Gastrocnemius medialis (tissue), 4 donors: ENCODE measurements at regions of chrX and their contacts with region 1.

Region 1: DNA sequence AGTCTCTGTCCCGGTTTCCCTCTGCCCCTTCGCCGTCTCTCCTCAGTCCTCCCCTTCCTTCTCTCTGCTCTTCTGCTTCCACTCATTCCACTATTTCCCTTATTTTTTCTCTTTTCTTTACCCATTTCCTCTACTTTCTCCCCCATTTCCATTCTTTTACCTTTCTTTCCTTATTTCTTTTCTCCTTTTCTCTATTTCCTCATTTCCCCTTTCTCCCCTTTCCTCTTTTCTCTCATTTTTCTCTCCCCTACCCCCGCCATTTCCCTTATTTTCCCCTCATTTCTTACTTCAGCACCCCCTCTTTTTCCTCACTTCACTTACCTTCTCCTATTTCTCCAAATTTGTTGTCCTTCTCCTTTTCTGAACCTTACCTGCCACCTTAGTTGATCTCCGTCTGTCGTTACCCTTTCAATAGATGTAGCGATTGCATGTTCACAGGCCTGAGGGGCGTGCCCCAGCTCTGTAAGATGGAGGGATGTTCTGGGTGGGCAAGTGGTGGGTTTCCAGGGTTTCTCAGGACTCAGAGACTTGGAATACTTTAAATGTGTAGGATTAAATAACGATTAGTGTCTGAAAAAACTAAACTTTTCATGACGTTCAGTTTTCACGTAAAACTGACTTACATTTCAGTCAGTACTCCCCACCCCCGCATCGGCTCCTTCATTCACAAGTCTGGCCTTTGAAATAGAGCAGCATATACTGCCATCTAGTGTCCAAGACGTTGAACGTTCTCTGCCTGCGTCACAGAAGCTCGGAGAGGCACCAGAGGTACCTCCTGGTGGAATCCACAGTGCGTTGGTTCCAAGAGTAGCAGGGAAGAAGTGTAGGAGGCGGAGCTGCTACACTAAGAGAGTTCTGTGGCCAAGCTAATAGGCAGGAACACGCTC is 641 bp upstream of the NCBP2L start:
- DNase-seq: peak; percentile 74 to 78
- ATAC-seq: peak; percentile 59 to 76
- H3K4me3 ChIP-seq: peak overlapping the region; percentile 64 to 74 (median 68)
- H3K27ac ChIP-seq: peak overlapping the region; percentile 91 to 96 (median 93)
- H3K4me1 ChIP-seq: peaks cover 9 to 13% of the 10 kb centered on the region in 2 donors
- H3K27me3 ChIP-seq: no peaks in the 10 kb centered on the region
- CTCF ChIP-seq: peak; percentile 66 to 81 (median 78)
- POLR2A ChIP-seq: no peak

Region 2: DNA sequence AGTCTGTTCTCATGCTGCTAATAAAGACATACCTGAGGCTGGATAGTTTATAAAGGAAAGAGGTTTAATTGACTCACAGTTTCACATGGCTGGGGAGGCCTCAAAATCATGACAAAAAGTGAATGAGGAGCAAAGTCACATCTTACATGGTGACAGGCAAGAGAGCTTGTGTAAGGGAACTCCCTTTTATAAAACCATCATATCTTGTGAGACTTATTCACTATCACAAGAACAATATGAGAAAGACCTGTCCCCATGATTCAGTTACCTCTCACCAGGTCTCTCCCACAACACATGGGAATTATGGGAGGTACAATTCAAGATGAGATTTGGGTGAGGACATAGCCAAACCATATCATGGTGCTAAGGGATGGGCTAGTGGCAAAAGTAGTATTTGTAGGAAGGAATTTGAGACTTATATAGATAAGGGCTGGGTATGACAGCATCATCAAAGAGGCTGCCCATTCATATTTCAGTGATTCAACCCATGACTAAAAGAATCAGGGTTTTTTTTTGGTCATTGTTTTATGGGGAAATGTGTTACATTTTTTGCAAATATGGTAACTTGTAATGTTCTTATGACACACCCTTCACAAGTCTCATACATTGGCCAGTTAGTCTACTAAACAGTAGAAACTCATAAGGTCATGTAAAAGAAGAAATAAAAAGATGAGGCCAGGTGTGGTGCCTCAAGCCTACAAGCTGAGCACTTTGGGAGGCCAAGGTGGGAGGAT is 605.4 kb before region 1 on chrX:
- in situ Hi-C with region 1: no loop called
- intact Hi-C with region 1: no loop called
- DNase-seq: no peak
- ATAC-seq: no peak
- H3K4me3 ChIP-seq: no peak overlapping the region
- H3K27ac ChIP-seq: no peak overlapping the region
- H3K4me1 ChIP-seq: no peaks in the 10 kb centered on the region
- H3K27me3 ChIP-seq: no peaks in the 10 kb centered on the region
- CTCF ChIP-seq: no peak
- POLR2A ChIP-seq: no peak

Region 3: GRCh38 chrX:107292711-107293495 is 484.0 kb before region 1 on chrX:
- in situ Hi-C with region 1: no loop called
- intact Hi-C with region 1: no loop called
- DNase-seq: no peak
- ATAC-seq: no peak
- H3K4me3 ChIP-seq: no peak overlapping the region
- H3K27ac ChIP-seq: no peak overlapping the region
- H3K4me1 ChIP-seq: no peaks in the 10 kb centered on the region
- H3K27me3 ChIP-seq: no peaks in the 10 kb centered on the region
- CTCF ChIP-seq: no peak
- POLR2A ChIP-seq: no peak

Region 4: DNA sequence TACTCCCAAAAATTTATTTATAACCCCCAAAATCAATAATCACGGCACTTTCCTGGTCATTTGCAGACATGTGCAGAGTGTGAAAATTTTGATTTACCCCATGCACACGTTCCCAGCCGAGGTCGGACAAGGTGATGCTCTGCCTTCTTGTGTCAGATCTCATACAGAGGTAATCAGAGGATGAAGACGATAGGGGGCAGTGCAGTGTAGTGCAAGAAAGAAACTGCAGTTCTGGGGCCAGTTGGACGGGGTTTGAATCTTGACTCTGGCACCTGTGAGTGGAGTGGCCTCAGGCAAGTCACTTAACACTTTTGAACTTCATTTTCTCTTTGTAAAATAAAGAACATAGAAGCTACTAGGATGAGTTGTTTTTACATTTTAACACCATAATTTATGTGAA is 239.1 kb before region 1 on chrX:
- in situ Hi-C with region 1: no loop called
- intact Hi-C with region 1: loop called (anchors 5 kb)
- DNase-seq: no peak
- ATAC-seq: no peak
- H3K4me3 ChIP-seq: no peak overlapping the region
- H3K27ac ChIP-seq: no peak overlapping the region
- H3K4me1 ChIP-seq: no peaks in the 10 kb centered on the region
- H3K27me3 ChIP-seq: no peaks in the 10 kb centered on the region
- CTCF ChIP-seq: peak in 2 of 5 experiments; percentile 18 to 33
- POLR2A ChIP-seq: no peak

Region 5: GRCh38 chrX:107672955-107673378 is 103.9 kb before region 1 on chrX:
- in situ Hi-C with region 1: loop called in 2 of 4 experiments (anchors 10 kb)
- intact Hi-C with region 1: loop called (anchors 1 kb)
- DNase-seq: peak; percentile 63 to 85
- ATAC-seq: peak; percentile 13 to 28
- H3K4me3 ChIP-seq: peak overlapping the region in 2 of 4 donors; percentile 20 to 28
- H3K27ac ChIP-seq: peak overlapping the region; percentile 89 to 94 (median 92)
- H3K4me1 ChIP-seq: peaks cover 16 to 17% of the 10 kb centered on the region in 2 donors
- H3K27me3 ChIP-seq: no peaks in the 10 kb centered on the region
- CTCF ChIP-seq: peak; percentile 69 to 81 (median 78)
- POLR2A ChIP-seq: peak; percentile 31 to 48

Region 6: GRCh38 chrX:107731831-107732502 is 44.9 kb before region 1 on chrX:
- in situ Hi-C with region 1: loop called in 1 of 4 experiments (anchors 5 kb)
- intact Hi-C with region 1: loop called (anchors 2 kb)
- DNase-seq: peak; percentile 84 to 95
- ATAC-seq: peak; percentile 63 to 67
- H3K4me3 ChIP-seq: peak overlapping the region in 1 of 4 donors; percentile 5
- H3K27ac ChIP-seq: peak overlapping the region; percentile 87 to 96 (median 94)
- H3K4me1 ChIP-seq: peaks cover 70 to 87% of the 10 kb centered on the region in 2 donors
- H3K27me3 ChIP-seq: no peaks in the 10 kb centered on the region
- CTCF ChIP-seq: no peak
- POLR2A ChIP-seq: peak in 1 of 2 donors; percentile 27

Region 7: GRCh38 chrX:107766470-107767150 is 10.3 kb before region 1 on chrX:
- in situ Hi-C with region 1: no loop called
- intact Hi-C with region 1: no loop called
- DNase-seq: peak in 1 of 2 donors; percentile 70
- ATAC-seq: peak; percentile 90 to 93
- H3K4me3 ChIP-seq: no peak overlapping the region
- H3K27ac ChIP-seq: peak overlapping the region; percentile 69 to 79 (median 76)
- H3K4me1 ChIP-seq: peaks cover 31 to 50% of the 10 kb centered on the region in 2 donors
- H3K27me3 ChIP-seq: no peaks in the 10 kb centered on the region
- CTCF ChIP-seq: no peak
- POLR2A ChIP-seq: no peak

Region 8: GRCh38 chrX:107894038-107894437 is 117.1 kb after region 1 on chrX:
- in situ Hi-C with region 1: loop called in 2 of 4 experiments (anchors 25 kb)
- intact Hi-C with region 1: loop called (anchors 5 kb)
- DNase-seq: no peak
- ATAC-seq: peak in 1 of 2 donors; percentile 87
- H3K4me3 ChIP-seq: no peak overlapping the region
- H3K27ac ChIP-seq: no peak overlapping the region
- H3K4me1 ChIP-seq: no peaks in the 10 kb centered on the region
- H3K27me3 ChIP-seq: no peaks in the 10 kb centered on the region
- CTCF ChIP-seq: peak; percentile 44 to 65 (median 57)
- POLR2A ChIP-seq: no peak